ENCODE measurements at regions of chr3 and their contacts with region 1.

Region 1: DNA sequence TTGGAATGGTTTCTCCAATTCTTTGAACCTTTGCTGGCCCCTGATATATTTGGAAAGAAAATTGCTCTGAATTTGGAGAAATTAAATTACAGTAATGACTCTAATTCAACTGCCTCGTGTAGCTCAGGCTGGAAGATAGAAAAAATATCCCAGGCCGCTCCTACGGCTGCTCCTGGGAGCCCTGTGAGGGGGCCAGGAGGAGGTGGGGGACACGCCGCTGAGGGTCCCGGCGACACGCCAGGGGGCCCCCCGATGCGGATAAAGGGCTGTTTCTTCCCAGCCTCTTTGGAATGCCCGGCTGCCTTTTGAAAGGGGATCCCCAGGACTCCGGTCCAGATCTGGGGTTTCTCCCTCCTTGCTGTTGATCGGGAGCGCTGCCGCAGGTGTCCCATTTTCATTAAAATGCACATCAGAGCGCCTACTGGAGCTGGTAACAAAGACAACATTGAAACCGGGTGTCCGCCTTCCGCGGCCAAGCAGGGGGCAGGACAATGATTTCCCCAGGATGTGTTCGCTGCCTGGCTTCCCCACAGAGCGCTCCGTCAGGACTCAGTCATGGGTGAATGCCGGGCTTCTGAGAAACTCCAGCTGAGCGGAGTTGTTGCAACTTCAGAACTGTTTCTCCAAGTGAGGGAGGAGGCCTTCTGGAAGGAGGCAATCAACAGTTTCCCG is 200.1 kb upstream of the KBTBD8 start:
- DNase-seq: peak; percentile 59
- ATAC-seq: peak; percentile 65 to 79

Region 2: DNA sequence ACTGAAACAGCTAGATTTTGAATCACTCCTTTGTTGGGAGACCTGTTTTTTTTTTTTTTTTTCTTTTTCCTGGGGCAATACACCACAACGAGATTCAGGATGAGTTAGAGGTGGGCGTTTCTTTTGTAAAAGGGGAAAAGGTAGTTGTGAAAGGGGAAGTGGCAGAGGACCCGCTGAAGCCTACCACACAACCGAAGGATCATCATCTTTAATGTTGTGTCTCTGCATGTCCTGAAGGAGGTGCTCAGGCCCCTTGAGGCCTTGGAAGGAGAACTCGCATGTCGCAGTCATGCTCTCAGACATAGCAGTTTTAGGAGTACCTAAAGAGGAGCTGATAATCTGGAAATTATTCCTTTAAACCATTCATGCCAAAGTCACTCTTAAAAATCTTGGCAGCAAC is 159.3 kb before region 1 on chr3:
- intact Hi-C with region 1: loop called in 1 of 2 experiments (anchors 10 kb)
- DNase-seq: no peak
- ATAC-seq: no peak